ENCODE measurements at regions of chr17 and their contacts with region 1.

Region 1: GRCh38 chr17:40559954-40560591 is 5.2 kb downstream of the CCR7 start:
- DNase-seq: peak; percentile 89 to 92
- ATAC-seq: peak; percentile 76 to 89 (median 83)
- H3K4me3 ChIP-seq: peak overlapping the region in 5 of 10 donors; percentile 6 to 40 (median 20)
- H3K27ac ChIP-seq: peak overlapping the region in 9 of 10 donors; percentile 61 to 94 (median 82)
- H3K4me1 ChIP-seq: peaks cover 28 to 72% (median 53%) of the 10 kb centered on the region in 9 donors
- H3K27me3 ChIP-seq: peaks cover 0 to 21% (median 0%) of the 10 kb centered on the region in 7 donors
- CTCF ChIP-seq: peak; percentile 95 to 99 (median 98)

Region 2: GRCh38 chr17:40287494-40288369 is 272.3 kb before region 1 on chr17 and contains the start of gene CDC6:
- intact Hi-C with region 1: loop called in 1 of 10 experiments (anchors 10 kb)
- DNase-seq: peak; percentile 97 to 99
- ATAC-seq: peak; percentile 97 to 99 (median 98)
- H3K4me3 ChIP-seq: peak within 1 kb of the TSS; percentile 23 to 76 (median 50)
- H3K27ac ChIP-seq: peak within 1 kb of the TSS in 5 of 10 donors; percentile 23 to 54 (median 37)
- H3K4me1 ChIP-seq: peaks cover 0 to 59% (median 33%) of the 10 kb centered on the region in 9 donors
- H3K27me3 ChIP-seq: no peaks in the 10 kb centered on the region
- CTCF ChIP-seq: no peak
- total RNA-seq, gene CDC6: 0.49 to 3.0 (median 0.86) TPM

Region 3: DNA sequence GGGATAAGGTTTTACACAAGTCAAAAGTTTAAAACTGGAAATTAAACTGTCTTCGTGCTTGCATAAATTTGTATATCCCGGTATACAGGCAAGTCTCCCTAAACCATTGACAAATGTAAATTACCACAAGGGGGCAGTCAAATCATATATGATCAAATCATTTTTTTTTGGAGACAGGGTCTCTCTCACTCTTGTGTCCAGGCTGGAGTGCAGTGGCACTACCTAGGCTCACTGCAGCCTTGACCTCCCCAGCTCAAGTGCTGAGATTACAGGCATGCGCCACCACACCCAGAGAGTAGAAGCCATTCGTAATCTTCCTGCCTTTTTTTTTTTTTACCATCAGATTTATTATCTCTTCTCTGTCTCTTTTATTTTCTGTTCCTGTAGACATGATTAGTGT is 160.9 kb before region 1 on chr17:
- intact Hi-C with region 1: loop called in 3 of 10 experiments (anchors 1 to 5 kb)
- DNase-seq: no peak
- ATAC-seq: peak in 4 of 8 donors; percentile 13 to 57 (median 38)
- H3K4me3 ChIP-seq: no peak overlapping the region
- H3K27ac ChIP-seq: no peak overlapping the region
- H3K4me1 ChIP-seq: no peaks in the 10 kb centered on the region
- H3K27me3 ChIP-seq: no peaks in the 10 kb centered on the region
- CTCF ChIP-seq: peak; percentile 30 to 78 (median 68)

Region 4: DNA sequence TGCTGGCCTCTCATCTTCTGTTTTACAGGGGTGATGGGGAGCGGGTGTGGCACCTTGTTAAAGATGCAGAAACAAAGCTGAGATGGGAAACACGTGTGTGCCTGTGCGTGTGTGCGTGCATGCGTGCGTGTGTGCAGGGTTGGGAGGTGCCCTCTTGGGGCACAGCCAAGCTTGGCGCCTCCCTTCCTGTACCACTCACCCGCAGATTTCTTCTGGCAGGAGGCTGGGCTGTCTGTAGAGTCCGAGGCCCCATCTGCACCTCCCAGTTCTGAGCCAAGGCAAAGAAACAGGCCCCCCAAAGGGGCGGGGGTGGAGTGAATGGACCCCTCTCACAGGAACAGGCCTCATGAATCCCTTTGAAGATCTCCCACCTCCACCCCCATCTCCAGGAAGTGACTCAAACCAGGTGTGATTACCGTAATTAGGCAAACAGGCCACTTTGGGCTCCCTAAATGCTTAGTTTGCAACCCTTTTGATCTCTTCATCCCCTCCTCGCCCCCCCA is 79.5 kb before region 1 on chr17:
- intact Hi-C with region 1: loop called in 2 of 10 experiments (anchors 5 kb)
- DNase-seq: peak in 1 of 2 donors; percentile 37
- ATAC-seq: peak in 6 of 8 donors; percentile 13 to 54 (median 40)
- H3K4me3 ChIP-seq: no peak overlapping the region
- H3K27ac ChIP-seq: peak overlapping the region in 1 of 10 donors; percentile 82
- H3K4me1 ChIP-seq: peaks cover 0 to 42% (median 6%) of the 10 kb centered on the region in 9 donors
- H3K27me3 ChIP-seq: no peaks in the 10 kb centered on the region
- CTCF ChIP-seq: no peak

Region 5: DNA sequence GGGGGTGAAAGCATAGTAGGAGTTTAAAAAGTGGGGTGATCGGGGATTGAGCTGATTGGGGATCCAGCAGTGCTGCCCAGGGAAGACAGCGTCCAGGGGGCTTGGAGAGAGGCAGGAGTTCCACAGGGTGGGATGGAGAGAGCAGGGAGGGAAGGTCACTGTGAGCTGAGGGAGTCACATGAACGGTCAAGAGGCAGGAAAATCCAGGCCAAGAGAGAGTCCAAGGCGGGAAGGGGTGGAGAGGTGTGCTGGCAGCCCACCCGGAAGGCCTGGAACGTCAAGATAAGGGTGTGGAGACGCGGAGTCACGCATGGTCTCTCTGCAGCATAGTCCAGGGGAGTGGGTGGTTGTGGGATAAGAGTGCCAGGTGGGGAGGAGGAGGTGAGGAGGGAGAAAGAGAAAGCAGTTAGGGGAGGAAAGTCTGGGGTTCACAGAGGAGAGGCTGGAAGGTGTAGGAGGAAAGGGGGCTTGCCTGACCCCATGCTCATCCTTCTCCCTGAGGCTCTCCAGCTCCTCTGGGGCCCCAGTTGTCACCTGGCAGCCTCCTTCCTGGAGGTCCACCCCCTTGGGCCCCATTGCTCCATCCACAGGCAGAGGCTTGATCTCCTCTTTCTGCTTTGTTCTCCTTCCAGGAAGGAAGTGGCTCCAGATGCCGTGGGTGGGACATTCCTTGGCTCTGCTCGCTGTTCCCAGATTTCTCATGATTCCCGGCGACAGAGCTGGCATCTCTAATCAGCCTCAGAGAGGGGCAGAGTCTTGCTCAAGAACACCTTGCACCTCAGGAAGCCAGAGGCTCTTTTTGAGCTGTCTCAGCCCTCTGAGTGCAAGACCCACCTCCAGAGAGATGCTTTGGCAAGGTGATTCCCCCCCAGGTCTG is 23.5 kb before region 1 on chr17:
- intact Hi-C with region 1: loop called in 3 of 10 experiments (anchors 2 kb)
- DNase-seq: peak; percentile 70 to 80
- ATAC-seq: peak; percentile 40 to 81 (median 62)
- H3K4me3 ChIP-seq: no peak overlapping the region
- H3K27ac ChIP-seq: peak overlapping the region; percentile 5 to 97 (median 89)
- H3K4me1 ChIP-seq: peaks cover 37 to 96% (median 82%) of the 10 kb centered on the region in 9 donors
- H3K27me3 ChIP-seq: no peaks in the 10 kb centered on the region
- CTCF ChIP-seq: no peak

Measured in heart right ventricle (tissue), 16 donors.